CD4-positive, alpha-beta T cell (primary cell): ENCODE measurements at regions of chr14 and their contacts with region 1.

Region 1: DNA sequence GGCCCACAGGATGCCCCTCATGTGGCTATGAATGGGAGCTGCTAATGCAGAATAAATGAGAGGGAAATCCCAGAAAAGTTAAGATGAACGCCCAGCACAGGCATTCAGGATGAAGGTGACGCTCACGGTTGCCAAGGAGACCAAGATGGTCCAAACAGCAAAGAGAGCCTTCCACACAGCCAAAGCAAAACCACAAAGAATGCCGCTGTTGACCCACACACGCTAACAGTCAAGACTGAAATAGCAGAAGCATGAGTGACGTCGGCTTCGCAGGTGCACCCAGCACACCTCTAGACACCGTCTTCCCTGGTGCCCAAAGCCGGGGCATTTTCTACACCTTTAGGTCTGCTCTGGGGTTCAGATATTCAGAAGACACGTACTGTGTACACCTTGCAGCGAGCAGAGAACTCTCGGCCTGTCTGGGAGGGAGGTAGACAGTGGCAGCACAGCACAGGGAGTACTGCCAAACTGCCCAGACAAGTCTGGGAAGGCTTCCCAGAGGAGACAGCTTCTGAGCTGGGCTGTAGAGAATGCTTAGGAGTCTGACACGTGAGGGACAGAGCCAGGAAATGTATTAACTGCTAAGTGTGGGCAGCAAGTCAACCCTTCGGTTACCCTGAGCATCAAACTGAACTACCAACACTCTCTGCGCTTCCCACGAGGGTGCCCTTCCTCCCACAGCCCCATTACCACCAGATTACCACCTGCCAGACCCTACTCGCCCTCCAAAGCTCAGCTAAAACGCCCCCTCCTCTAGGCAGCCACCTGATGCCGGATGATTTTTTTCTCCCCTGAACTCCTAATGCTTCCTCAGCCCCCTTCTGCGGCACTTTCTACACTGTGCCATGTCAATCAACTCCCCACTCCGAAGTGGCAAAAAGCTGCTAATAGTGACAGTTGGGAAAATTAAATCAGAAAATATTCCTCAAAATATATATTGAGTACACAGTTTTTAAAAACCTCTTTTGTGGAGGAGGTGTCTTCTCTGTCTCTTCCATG is 50.1 kb downstream of the CCDC88C start:
- DNase-seq: peak in 13 of 14 experiments; percentile 37 to 98 (median 64)
- ATAC-seq: peak; percentile 85
- H3K4me3 ChIP-seq: peak overlapping the region; percentile 32
- H3K4me3 Mint-ChIP-seq: peak overlapping the region; percentile 86
- H3K27ac ChIP-seq: peak overlapping the region; percentile 76 to 80
- H3K27ac Mint-ChIP-seq: peak overlapping the region; percentile 96
- H3K4me1 ChIP-seq: peaks cover 99% of the 10 kb centered on the region
- H3K4me1 Mint-ChIP-seq: peaks cover 86% of the 10 kb centered on the region
- H3K27me3 ChIP-seq: no peaks in the 10 kb centered on the region
- H3K27me3 Mint-ChIP-seq: no peaks in the 10 kb centered on the region
- CTCF ChIP-seq: no peak

Region 2: GRCh38 chr14:91356181-91356763 is 11.2 kb before region 1 on chr14:
- CTCF ChIA-PET with region 1: interaction called, 5 read pairs
- POLR2A ChIA-PET with region 1: interaction called, 37 read pairs
- intact Hi-C with region 1: loop called (anchors 2 kb)
- DNase-seq: peak in 1 of 14 experiments; percentile 21
- ATAC-seq: peak; percentile 28
- H3K4me3 ChIP-seq: no peak overlapping the region
- H3K4me3 Mint-ChIP-seq: peak overlapping the region; percentile 81
- H3K27ac ChIP-seq: peak overlapping the region; percentile 44 to 81
- H3K27ac Mint-ChIP-seq: peak overlapping the region; percentile 94
- H3K4me1 ChIP-seq: peaks cover 99% of the 10 kb centered on the region
- H3K4me1 Mint-ChIP-seq: peaks cover 92% of the 10 kb centered on the region
- H3K27me3 ChIP-seq: no peaks in the 10 kb centered on the region
- H3K27me3 Mint-ChIP-seq: no peaks in the 10 kb centered on the region
- CTCF ChIP-seq: no peak

Region 3: DNA sequence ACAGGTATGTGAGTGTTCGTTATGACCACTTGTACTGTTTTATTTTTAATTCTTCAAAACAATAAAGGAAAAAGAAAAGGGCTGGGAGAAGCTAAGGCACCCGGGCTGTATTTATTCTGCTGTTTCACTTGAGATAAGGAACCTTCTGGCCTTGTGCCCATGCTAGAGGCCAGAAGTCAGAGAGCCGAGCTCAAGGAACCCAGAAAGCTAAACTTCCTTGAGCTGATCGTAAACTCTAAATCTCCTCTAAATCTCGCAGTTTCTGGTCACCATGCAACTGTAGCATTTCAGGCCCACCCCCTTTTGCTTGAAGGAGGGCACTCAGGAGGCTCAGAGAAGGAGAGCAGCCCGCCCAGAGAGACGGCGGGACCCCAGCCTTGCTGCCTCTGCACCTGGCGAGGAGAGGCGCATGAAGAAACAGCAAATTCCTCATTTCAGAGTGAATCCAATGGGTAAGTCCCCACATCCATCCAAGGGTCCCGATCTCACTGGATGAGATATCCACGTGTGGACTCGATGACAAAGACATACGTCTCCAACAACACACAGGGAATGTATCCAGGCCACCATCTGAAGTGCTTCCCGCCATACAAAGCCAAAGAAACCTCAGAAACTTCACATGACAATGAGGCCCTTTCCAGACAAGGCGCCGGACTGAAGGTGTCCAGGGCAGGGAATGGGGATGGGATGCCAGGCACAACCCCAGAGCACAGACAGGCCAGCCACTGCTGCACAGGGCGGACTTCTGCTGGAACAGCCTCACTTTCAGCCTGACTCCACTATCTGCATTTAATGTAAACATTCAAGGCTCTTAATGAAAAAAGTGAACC is 35.5 kb after region 1 on chr14:
- CTCF ChIA-PET with region 1: interaction called, 4 read pairs
- POLR2A ChIA-PET with region 1: interaction called, 37 read pairs
- intact Hi-C with region 1: loop called (anchors 2 to 5 kb)
- DNase-seq: peak in 1 of 14 experiments; percentile 27
- ATAC-seq: no peak
- H3K4me3 ChIP-seq: peak overlapping the region; percentile 17
- H3K4me3 Mint-ChIP-seq: peak overlapping the region; percentile 81
- H3K27ac ChIP-seq: peak overlapping the region; percentile 70 to 85
- H3K27ac Mint-ChIP-seq: peak overlapping the region; percentile 98
- H3K4me1 ChIP-seq: peaks cover 98% of the 10 kb centered on the region
- H3K4me1 Mint-ChIP-seq: peaks cover 90% of the 10 kb centered on the region
- H3K27me3 ChIP-seq: no peaks in the 10 kb centered on the region
- H3K27me3 Mint-ChIP-seq: no peaks in the 10 kb centered on the region
- CTCF ChIP-seq: no peak